GM12878 (cell line): ENCODE measurements at regions of chr7 and their contacts with region 1.

Region 1: GRCh38 chr7:43454936-43455518 is 127.9 kb upstream of the STK17A start:
- DNase-seq: peak; percentile 13
- ATAC-seq: peak; percentile 92
- H3K4me3 ChIP-seq: no peak overlapping the region
- H3K27ac ChIP-seq: no peak overlapping the region
- H3K4me1 ChIP-seq: no peaks in the 10 kb centered on the region
- H3K27me3 ChIP-seq: no peaks in the 10 kb centered on the region; a peak in 2 of 4 replicates
- CTCF ChIP-seq: peak; percentile 44 to 57 (median 45)
- EP300 ChIP-seq: peak in 1 of 2 experiments; percentile 13; a peak in 1 of 4 replicates
- POLR2A ChIP-seq: no peak
- RAD21 ChIP-seq: peak; percentile 50; the same call in 1 of the 2 replicates

Region 2: DNA sequence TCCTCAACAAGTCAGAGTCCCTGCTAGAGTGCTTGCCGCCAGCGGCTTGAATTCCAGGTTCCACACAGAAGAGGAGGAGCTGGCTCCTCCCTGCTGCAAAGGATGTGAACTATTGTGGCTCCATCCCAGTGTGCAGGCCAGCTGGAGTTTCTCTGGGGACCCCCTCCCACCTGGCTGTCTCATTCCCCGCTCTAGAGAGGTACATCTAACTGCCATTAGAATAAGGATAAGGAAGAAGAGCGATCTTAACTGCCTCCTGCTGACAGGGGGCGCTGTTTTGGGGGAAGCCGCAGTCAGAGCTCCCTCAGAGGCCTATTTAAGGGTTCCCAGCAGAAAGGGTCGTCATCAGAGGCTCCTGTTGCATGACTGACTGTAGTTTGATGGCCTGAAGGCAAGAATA is 383.4 kb before region 1 on chr7:
- CTCF ChIA-PET with region 1: interaction called, 3 read pairs
- POLR2A ChIA-PET with region 1: no interaction called
- RAD21 ChIA-PET with region 1: no interaction called
- SMC1A ChIA-PET with region 1: no interaction called
- in situ Hi-C with region 1: no loop called
- intact Hi-C with region 1: loop called (anchors 10 kb)
- DNase-seq: no peak
- ATAC-seq: peak; percentile 48
- H3K4me3 ChIP-seq: no peak overlapping the region
- H3K27ac ChIP-seq: no peak overlapping the region
- H3K4me1 ChIP-seq: peaks cover 13% of the 10 kb centered on the region
- H3K27me3 ChIP-seq: no peaks in the 10 kb centered on the region
- CTCF ChIP-seq: peak; percentile 16 to 43 (median 34); a peak in 3 of 6 replicates
- EP300 ChIP-seq: no peak
- POLR2A ChIP-seq: no peak
- RAD21 ChIP-seq: peak; percentile 23; the same call in 1 of the 2 replicates

Region 3: GRCh38 chr7:43314379-43315189 is 140.4 kb before region 1 on chr7:
- CTCF ChIA-PET with region 1: interaction called, 18 read pairs
- POLR2A ChIA-PET with region 1: interaction called, 4 read pairs
- RAD21 ChIA-PET with region 1: interaction called, 5 read pairs
- SMC1A ChIA-PET with region 1: interaction called, 6 read pairs
- in situ Hi-C with region 1: no loop called
- intact Hi-C with region 1: no loop called
- DNase-seq: no peak
- ATAC-seq: peak; percentile 85
- H3K4me3 ChIP-seq: no peak overlapping the region
- H3K27ac ChIP-seq: no peak overlapping the region; the same call in 1 of the 2 replicates
- H3K4me1 ChIP-seq: peaks cover 17% of the 10 kb centered on the region
- H3K27me3 ChIP-seq: no peaks in the 10 kb centered on the region
- CTCF ChIP-seq: peak in 2 of 3 experiments; percentile 11 to 36; a peak in 3 of 6 replicates
- EP300 ChIP-seq: peak; percentile 92 to 96; a peak in 3 of 4 replicates
- POLR2A ChIP-seq: no peak
- RAD21 ChIP-seq: peak; percentile 18; the same call in 1 of the 2 replicates

Region 4: GRCh38 chr7:43467406-43467805 is 12.4 kb after region 1 on chr7:
- CTCF ChIA-PET with region 1: interaction called, 21 read pairs
- POLR2A ChIA-PET with region 1: no interaction called
- RAD21 ChIA-PET with region 1: interaction called, 5 read pairs
- SMC1A ChIA-PET with region 1: interaction called, 9 read pairs
- in situ Hi-C with region 1: no loop called
- intact Hi-C with region 1: no loop called
- DNase-seq: no peak
- ATAC-seq: peak; percentile 44
- H3K4me3 ChIP-seq: no peak overlapping the region
- H3K27ac ChIP-seq: no peak overlapping the region
- H3K4me1 ChIP-seq: peaks cover 2% of the 10 kb centered on the region; the same call in 1 of the 2 replicates
- H3K27me3 ChIP-seq: no peaks in the 10 kb centered on the region; a peak in 1 of 4 replicates
- CTCF ChIP-seq: no peak
- EP300 ChIP-seq: no peak
- POLR2A ChIP-seq: no peak
- RAD21 ChIP-seq: no peak

Region 5: DNA sequence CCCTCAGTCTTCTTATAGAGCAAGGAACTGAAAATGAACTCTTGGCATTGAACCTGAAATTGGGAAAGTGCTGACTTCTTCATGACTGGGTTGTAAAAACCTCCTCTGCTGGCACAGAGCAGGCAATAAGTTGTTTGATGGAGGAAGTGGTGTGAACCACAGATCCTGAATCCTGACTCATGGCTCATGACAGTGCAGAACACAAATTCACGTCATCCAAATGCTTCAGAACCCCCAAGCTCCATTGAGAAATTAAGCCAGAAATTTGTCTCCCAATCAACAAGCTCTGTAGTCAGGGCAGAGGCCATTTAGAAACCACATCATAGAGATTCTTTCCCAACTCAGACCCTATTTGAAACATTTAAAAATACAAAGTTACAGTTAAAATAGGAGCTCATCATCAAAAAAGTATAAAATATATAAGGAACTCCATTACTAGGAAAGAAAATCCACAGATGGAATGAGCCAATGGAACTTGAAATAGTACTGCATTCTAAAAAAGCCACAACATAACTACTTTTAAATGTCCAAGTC is 117.6 kb after region 1 on chr7:
- CTCF ChIA-PET with region 1: interaction called, 11 read pairs
- POLR2A ChIA-PET with region 1: interaction called, 3 read pairs
- RAD21 ChIA-PET with region 1: interaction called, 3 read pairs
- SMC1A ChIA-PET with region 1: interaction called, 9 read pairs
- in situ Hi-C with region 1: no loop called
- intact Hi-C with region 1: no loop called
- DNase-seq: no peak
- ATAC-seq: peak; percentile 65
- H3K4me3 ChIP-seq: no peak overlapping the region
- H3K27ac ChIP-seq: peak overlapping the region; percentile 18; the same call in 1 of the 2 replicates
- H3K4me1 ChIP-seq: peaks cover 33% of the 10 kb centered on the region
- H3K27me3 ChIP-seq: no peaks in the 10 kb centered on the region
- CTCF ChIP-seq: no peak
- EP300 ChIP-seq: no peak; a peak in 1 of 4 replicates
- POLR2A ChIP-seq: no peak
- RAD21 ChIP-seq: no peak